Posterior cingulate gyrus (tissue), 11 donors: ENCODE measurements at regions of chr16 and their contacts with region 1.

Region 1: DNA sequence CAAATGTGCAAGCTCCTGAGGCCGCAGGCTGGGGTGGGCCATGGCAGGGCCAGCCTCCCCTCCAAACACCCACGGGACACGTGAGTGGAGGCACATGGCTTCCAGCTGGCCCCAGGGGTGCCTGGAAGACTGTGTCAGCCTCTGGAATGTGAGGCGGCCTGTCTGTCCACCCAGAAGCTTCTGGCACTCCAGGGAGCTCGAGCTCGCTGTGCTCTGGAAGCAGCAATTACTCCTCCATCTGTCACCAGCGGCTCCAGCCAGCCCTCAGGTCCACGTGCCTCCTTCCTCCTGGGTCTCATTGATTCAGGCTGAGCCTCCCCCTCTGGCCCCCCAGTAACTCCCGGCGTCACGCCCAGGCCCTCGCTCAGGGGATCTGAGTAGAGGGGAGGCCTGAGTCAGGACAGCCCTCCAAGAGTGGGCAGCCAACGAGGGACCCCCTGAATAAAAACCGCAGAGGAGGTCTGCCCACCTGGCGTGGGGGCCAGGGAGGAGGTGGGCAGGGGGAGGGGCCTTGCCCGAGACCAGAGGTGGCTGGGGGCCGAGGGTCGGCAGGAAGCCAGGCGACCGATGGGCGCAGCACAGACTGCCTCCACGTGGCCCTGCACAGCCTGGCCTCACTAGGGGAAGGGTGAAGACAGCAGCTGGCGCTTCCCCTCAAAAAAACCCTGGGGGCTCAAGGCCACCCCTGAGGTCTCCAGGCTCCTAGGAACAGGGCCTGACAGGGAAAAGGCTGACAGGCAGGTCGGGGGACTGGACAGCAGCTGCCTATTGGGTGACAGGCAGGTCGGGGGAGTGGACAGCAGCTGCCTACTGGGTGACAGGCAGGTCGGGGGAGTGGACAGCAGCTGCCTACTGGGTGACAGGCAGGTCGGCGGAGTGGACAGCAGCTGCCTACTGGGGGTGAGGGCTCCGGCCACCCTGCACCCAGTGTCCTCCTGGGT is 11.9 kb downstream of the PIEZO1 start:
- DNase-seq: peak in 1 of 10 donors; percentile 36

Region 2: DNA sequence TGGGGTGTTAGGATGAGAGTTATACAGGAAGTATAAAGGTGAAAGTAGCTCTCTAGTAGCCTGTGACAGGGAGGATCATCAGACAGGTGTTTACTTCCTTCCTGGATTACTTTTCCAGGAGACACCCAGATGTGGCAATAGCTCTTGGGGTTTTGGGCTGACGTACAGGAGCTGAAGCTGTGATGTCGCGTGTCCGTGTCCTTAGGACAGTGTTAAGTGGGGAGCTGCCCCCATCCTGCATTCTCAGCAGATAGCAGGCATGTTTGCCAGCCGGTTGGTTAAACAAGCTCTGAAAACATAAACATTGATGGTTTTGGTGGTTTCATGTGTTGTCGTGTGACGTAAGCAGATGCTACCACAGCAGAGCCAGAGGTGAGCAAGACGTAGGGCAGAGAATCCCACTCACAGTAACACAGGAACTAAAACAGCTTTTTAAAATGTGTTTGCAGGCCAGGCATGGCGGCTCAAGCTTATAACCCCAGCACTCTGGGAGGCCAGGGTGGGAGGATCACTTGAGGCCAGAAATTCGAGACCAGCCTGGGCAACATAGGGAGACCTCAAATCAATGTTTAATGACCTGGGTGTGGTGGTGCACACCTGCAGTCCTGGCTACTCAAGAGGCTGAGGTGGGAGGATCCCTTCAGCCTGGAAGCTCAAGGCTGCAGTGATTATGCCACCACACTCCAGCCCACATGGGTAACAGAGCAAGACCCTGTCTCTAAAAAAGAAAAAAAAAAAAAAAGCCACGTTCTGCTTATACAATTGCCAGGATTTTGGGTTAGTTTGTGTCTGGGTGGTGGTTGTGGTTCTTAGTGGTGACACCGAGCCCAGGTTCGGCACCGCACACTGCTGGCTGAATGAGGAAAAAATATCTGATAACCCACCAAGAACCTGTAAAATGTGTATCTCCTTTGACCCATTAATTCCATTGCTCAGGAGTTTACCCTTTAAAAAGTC is 153.0 kb before region 1 on chr16:
- intact Hi-C with region 1: no loop called
- DNase-seq: no peak

Region 3: GRCh38 chr16:88793244-88793954 is 20.3 kb after region 1 on chr16:
- intact Hi-C with region 1: loop called (anchors 1 kb)
- DNase-seq: no peak

Region 4: DNA sequence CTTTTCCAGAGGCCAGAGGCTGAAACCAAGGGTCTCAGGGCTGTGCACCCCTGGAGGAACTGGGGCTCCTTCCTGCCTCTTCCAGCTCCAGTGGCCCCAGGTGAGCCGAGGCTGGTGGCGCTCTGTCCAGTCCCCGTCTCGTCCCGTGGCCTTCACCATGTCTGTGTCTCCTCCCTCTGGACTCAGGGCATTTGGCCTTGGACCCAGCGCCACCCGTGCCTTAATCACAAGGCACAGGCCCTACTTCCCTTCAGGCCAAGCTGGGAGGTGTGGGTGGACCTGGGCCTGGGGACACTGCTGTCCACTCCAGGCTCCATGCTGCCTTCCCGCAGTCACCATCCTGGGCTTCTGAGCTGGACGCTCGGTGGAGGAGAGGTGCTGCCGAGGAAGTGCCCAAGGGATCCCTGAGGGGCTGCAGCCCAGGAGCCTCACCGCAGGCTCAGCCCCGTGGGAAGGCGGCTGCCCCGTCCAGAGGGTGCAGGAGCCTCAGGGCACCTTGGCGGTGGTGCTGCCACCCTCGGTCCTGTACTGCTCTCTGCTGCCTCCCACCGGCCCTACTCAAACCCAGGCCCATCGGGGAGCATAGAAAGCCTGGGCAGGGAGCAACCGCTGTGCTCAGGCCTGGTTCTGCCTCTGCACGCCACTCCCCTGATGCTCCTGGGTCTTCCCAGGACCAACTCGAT is 48.2 kb after region 1 on chr16:
- intact Hi-C with region 1: no loop called
- DNase-seq: no peak

Region 5: DNA sequence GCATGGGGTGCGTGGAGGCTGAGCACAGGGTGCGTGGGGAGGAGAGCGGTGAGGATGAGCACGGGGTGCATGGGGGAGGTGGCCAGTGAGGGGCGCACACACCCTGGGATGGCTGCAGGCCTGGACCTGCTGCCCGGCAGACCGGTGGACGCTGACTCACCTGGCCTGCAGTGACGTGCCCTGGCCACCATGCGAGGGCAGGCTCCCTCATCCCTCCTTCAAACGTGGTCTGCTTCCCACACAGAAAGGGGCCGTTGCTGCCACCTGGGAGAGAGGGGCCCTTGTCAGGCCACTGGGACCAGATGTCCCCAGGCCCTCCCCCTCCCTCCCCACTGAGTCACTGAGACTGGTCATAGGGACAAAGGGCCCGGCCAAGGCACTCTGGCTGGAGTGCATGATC is 58.7 kb after region 1 on chr16:
- intact Hi-C with region 1: no loop called
- DNase-seq: no peak